HEK293 (cell line): ENCODE measurements at regions of chr2 and their contacts with region 1.

Region 1: DNA sequence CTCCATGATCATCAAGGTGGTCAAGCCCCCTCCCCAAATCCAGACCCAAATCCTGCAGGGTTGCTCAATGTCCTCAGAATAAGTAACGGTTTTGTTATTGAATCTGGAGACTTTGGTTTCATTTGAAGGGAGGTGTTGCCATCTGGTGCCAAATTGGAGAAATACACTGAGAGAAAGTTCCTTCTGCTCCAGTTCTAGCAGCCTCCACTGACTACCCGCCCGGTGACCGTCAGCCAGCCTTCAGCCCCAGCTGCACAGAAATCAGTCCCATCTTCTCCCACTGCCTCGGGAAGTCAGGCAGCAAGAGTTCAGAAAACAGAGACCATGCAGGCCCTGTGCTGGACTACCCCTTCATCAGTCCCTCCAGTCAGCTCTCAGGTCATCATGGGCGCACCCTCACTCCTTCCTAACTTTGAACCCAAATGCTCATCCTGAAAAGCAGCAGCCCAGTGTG is 38.7 kb downstream of the PKDCC start:
- H3K4me3 ChIP-seq: no peak overlapping the region
- H3K27ac ChIP-seq: no peak overlapping the region
- H3K4me1 ChIP-seq: peaks cover 9% of the 10 kb centered on the region
- CTCF ChIP-seq: peak; percentile 59; the same call in 1 of the 2 replicates

Region 2: GRCh38 chr2:41853427-41854216 is 232.9 kb before region 1 on chr2:
- CTCF ChIA-PET with region 1: interaction called, 214 read pairs
- POLR2A ChIA-PET with region 1: no interaction called
- H3K4me3 ChIP-seq: no peak overlapping the region
- H3K27ac ChIP-seq: no peak overlapping the region
- H3K4me1 ChIP-seq: no peaks in the 10 kb centered on the region
- CTCF ChIP-seq: peak; percentile 43

Region 3: GRCh38 chr2:41869542-41870264 is 216.8 kb before region 1 on chr2:
- CTCF ChIA-PET with region 1: interaction called, 369 read pairs
- POLR2A ChIA-PET with region 1: no interaction called
- H3K4me3 ChIP-seq: no peak overlapping the region
- H3K27ac ChIP-seq: no peak overlapping the region
- H3K4me1 ChIP-seq: peaks cover 4% of the 10 kb centered on the region
- CTCF ChIP-seq: peak; percentile 87

Region 4: GRCh38 chr2:42060718-42061619 is 25.6 kb before region 1 on chr2:
- CTCF ChIA-PET with region 1: interaction called, 12 read pairs
- POLR2A ChIA-PET with region 1: no interaction called
- H3K4me3 ChIP-seq: no peak overlapping the region
- H3K27ac ChIP-seq: no peak overlapping the region
- H3K4me1 ChIP-seq: peaks cover 18% of the 10 kb centered on the region
- CTCF ChIP-seq: no peak

Region 5: GRCh38 chr2:42102591-42103464 is 16.3 kb after region 1 on chr2:
- CTCF ChIA-PET with region 1: no interaction called
- POLR2A ChIA-PET with region 1: no interaction called
- H3K4me3 ChIP-seq: peak overlapping the region; percentile 35
- H3K27ac ChIP-seq: no peak overlapping the region
- H3K4me1 ChIP-seq: no peaks in the 10 kb centered on the region
- CTCF ChIP-seq: no peak

Region 6: GRCh38 chr2:42238644-42239288 is 152.2 kb after region 1 on chr2:
- CTCF ChIA-PET with region 1: interaction called, 22 read pairs
- POLR2A ChIA-PET with region 1: no interaction called
- H3K4me3 ChIP-seq: no peak overlapping the region
- H3K27ac ChIP-seq: no peak overlapping the region
- H3K4me1 ChIP-seq: peaks cover 13% of the 10 kb centered on the region
- CTCF ChIP-seq: peak; percentile 69